ENCODE measurements at regions of chr12 and their contacts with region 1.

Region 1: GRCh38 chr12:56224102-56224701 is at the start of gene NABP2:
- DNase-seq: peak; percentile 99
- CTCF ChIP-seq: peak; percentile 90

Region 2: DNA sequence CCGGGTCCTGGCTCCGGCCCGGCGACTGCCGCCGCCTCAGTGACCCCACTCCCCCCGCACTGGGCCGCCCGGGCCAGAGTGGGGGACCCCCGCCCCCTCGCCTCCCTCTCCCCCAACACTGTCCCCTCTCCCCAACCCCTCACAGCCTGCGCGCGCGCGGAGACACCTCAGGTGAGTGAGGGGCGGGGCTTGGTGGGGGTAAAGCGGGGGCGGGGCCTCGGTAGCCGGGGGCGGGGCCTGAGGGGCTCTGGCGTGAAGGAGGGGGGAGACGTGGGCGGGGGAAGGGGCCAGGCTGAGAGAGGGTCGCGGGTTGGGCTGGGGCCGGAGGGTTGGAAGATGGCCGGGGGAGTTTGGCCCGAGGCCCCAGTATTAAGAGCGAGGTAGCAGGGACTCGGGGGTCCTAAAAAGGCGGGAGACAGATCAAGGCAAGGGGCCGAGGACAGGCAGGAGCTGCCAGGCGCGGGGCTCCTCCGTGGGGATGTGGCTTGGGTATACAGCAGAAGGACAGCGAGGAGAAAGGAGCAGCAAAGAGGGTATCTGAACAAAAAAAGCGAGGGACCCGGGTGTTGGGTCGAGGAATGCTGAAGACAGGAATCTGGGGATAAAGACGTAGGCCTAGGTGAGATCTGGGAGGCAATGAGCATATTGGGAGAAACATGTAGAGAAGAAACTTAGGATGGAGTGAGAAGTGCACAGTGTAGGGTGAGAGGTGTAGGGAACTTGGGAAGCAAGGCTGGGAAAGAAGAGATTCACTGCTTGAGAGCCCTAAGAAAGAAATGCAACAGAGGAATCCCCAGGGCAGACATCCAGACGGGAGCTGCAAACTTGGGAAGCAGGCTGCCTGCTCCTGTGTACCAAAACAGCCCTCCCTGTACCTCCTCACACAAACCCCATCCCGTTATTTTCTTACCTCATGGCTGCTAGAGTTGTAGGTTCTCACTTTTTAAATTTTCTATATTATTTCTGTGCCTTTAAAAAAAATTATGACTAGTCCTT is 216.3 kb before region 1 on chr12:
- CTCF ChIA-PET with region 1: no interaction called
- POLR2A ChIA-PET with region 1: no interaction called
- DNase-seq: peak; percentile 84
- CTCF ChIP-seq: no peak

Region 3: DNA sequence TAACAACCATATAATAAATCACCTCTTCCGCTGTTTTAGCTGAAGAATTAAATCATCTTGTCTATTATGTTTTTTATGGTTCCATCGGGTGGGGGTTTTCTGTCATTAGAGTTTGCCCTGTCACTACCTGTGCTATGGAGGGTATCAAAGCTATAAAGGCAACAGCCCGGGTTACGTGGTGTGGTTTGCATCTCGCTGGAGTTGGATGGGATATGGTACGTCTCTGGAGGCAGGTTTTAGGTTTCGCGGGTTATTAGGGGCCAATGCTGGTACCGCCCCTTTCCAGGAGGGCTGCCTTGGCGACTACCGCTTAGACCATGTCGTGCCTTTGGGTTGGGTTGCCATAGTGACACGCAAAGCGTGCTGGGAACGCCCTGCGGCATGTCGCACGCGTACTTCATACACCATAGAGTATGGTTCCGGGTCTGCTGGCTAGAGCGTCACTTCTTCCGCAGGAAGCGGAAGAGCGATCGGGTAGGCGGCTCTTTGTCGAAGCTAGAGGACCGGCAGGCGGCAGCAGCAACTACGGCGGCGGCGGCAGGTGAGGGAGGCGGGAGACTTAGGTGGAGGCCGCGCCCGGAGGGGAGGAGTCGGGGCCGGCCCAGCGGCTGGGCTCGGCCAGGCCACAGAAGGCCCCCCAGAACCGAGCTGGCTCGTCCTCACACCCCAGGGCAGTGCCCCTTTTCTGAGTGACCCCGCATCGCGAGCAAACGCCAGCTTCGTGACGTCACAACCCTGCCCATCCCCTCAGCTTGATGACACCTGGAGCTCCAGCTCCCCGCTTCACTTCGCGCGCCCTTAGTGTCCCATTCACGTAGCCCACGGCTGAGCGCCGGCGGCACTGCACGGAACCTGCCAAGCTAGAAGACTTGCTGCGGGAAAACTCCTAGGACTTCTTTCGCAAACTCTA is 106.2 kb before region 1 on chr12 and contains the start of gene ZC3H10:
- CTCF ChIA-PET with region 1: interaction called, 34 read pairs
- POLR2A ChIA-PET with region 1: interaction called, 9 read pairs
- DNase-seq: peak; percentile 93
- CTCF ChIP-seq: peak; percentile 62

Region 4: DNA sequence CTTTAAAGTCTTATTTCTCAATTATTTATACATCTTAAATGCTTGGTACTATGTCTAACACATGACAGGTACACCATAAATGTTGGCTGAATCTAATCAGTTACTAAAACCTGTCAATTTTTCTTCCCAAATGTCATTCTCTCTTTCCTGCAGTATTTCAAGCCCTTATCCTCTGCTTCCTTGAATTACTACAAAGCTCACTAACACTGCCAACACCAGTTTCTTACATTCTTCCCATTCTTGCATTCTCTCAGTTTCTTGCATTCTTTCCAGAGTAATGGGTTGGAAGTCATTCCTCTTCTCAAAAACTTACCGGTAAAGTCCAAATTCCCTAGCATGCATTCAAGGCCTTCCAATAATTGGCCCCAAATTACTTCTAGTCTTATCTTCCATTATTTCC is 25.4 kb before region 1 on chr12:
- CTCF ChIA-PET with region 1: interaction called, 17 read pairs
- POLR2A ChIA-PET with region 1: no interaction called
- DNase-seq: no peak
- CTCF ChIP-seq: no peak

Region 5: GRCh38 chr12:56206457-56207166 is 17.6 kb before region 1 on chr12:
- CTCF ChIA-PET with region 1: interaction called, 44 read pairs
- POLR2A ChIA-PET with region 1: interaction called, 4 read pairs
- DNase-seq: peak; percentile 48
- CTCF ChIP-seq: peak; percentile 53

Region 6: GRCh38 chr12:56266693-56267442 is 42.7 kb after region 1 on chr12 and contains the start of gene COQ10A:
- CTCF ChIA-PET with region 1: interaction called, 10 read pairs
- POLR2A ChIA-PET with region 1: no interaction called
- DNase-seq: peak; percentile 94
- CTCF ChIP-seq: peak; percentile 43

Measured in GM10248 (cell line).